Common myeloid progenitor, CD34-positive (primary cell): ENCODE measurements at regions of chr17 and their contacts with region 1.

Region 1: GRCh38 chr17:55527540-55528118 is 16.4 kb upstream of the SMIM36 start:
- DNase-seq: peak; percentile 56 to 66 (median 58)
- H3K4me3 ChIP-seq: no peak overlapping the region
- H3K27ac ChIP-seq: no peak overlapping the region
- H3K4me1 ChIP-seq: no peaks in the 10 kb centered on the region
- H3K27me3 ChIP-seq: no peaks in the 10 kb centered on the region

Region 2: GRCh38 chr17:55513885-55514591 is 13.6 kb before region 1 on chr17:
- CTCF ChIA-PET with region 1: interaction called, 10 read pairs
- POLR2A ChIA-PET with region 1: no interaction called
- DNase-seq: peak; percentile 76 to 84 (median 76)
- H3K4me3 ChIP-seq: no peak overlapping the region
- H3K27ac ChIP-seq: no peak overlapping the region
- H3K4me1 ChIP-seq: no peaks in the 10 kb centered on the region
- H3K27me3 ChIP-seq: no peaks in the 10 kb centered on the region

Region 3: GRCh38 chr17:55576996-55577586 is 49.5 kb after region 1 on chr17:
- CTCF ChIA-PET with region 1: no interaction called
- POLR2A ChIA-PET with region 1: no interaction called
- DNase-seq: peak; percentile 27 to 75 (median 67)
- H3K4me3 ChIP-seq: peak overlapping the region; percentile 12 to 67 (median 37)
- H3K27ac ChIP-seq: peak overlapping the region in 1 of 2 experiments; percentile 75
- H3K4me1 ChIP-seq: peaks cover 4 to 17% (median 16%) of the 10 kb centered on the region in 4 experiments
- H3K27me3 ChIP-seq: no peaks in the 10 kb centered on the region

Region 4: GRCh38 chr17:55601874-55602364 is 74.3 kb after region 1 on chr17:
- CTCF ChIA-PET with region 1: interaction called, 122 read pairs
- POLR2A ChIA-PET with region 1: no interaction called
- DNase-seq: peak; percentile 41 to 72 (median 49)
- H3K4me3 ChIP-seq: no peak overlapping the region
- H3K27ac ChIP-seq: no peak overlapping the region
- H3K4me1 ChIP-seq: no peaks in the 10 kb centered on the region
- H3K27me3 ChIP-seq: no peaks in the 10 kb centered on the region

Region 5: GRCh38 chr17:55717898-55718735 is 190.5 kb after region 1 on chr17:
- CTCF ChIA-PET with region 1: interaction called, 17 read pairs
- POLR2A ChIA-PET with region 1: no interaction called
- DNase-seq: peak; percentile 61 to 82 (median 75)
- H3K4me3 ChIP-seq: no peak overlapping the region
- H3K27ac ChIP-seq: no peak overlapping the region
- H3K4me1 ChIP-seq: no peaks in the 10 kb centered on the region
- H3K27me3 ChIP-seq: peaks cover 0 to 7% (median 4%) of the 10 kb centered on the region in 5 experiments

Region 6: DNA sequence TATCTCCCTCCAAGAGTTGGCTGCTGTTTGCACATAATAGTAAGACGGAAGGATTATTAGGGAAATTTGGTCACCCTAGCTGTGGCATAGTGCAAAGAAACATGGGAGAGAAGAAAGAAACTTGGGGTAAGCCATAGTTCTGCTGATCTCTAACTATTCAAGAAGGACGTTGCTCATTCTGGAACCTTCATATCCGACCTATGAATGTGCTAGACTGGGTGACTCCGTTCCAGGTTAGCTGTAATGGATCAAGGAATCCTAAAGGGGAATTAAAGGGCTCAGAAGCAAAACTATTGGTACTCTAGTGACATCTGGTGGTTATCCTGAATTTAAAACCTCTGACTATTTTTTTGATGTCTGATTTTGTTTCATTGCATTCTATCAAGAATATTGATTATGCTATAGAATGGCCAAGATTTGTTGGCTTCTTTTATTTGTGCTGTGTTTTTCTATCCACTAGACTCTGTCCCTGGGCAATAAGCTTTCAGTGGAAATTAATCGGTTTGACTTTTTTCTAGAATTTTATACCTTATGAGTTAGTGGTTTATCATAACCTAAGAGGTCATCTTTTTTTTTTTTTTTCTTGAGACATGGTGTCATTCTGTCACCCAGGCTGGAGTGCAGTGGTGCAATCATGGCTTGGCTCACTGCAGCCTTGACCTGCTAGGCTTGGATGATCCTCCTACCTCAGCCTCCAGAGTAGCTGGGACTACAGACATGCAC is 242.7 kb after region 1 on chr17:
- CTCF ChIA-PET with region 1: interaction called, 79 read pairs
- POLR2A ChIA-PET with region 1: no interaction called
- DNase-seq: peak; percentile 36 to 56 (median 51)
- H3K4me3 ChIP-seq: no peak overlapping the region
- H3K27ac ChIP-seq: no peak overlapping the region
- H3K4me1 ChIP-seq: no peaks in the 10 kb centered on the region
- H3K27me3 ChIP-seq: no peaks in the 10 kb centered on the region

Region 7: DNA sequence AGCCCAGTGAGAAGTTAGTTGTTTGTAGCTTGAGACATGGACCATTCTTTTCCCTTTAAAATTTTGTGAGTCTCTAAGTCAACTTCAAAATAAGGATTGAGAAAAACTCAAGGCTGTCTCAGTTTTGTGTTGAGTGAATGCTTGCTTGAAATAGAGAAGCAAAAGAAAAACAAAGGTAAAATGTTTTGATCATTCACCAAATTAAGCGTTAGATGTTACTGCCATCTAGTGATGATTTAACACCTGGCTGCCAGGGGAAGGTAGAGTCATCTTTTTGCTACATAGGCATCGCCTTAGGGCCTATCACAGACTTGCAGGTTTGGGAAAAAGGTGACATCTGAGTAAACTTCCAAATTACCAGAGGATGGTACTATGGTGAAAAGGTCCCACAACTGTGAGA is 297.6 kb after region 1 on chr17:
- CTCF ChIA-PET with region 1: interaction called, 10 read pairs
- POLR2A ChIA-PET with region 1: no interaction called
- DNase-seq: peak; percentile 10 to 19 (median 14)
- H3K4me3 ChIP-seq: no peak overlapping the region
- H3K27ac ChIP-seq: no peak overlapping the region
- H3K4me1 ChIP-seq: no peaks in the 10 kb centered on the region
- H3K27me3 ChIP-seq: no peaks in the 10 kb centered on the region